Tibial artery (tissue), 4 donors: ENCODE measurements at regions of chr18 and their contacts with region 1.

Region 1: DNA sequence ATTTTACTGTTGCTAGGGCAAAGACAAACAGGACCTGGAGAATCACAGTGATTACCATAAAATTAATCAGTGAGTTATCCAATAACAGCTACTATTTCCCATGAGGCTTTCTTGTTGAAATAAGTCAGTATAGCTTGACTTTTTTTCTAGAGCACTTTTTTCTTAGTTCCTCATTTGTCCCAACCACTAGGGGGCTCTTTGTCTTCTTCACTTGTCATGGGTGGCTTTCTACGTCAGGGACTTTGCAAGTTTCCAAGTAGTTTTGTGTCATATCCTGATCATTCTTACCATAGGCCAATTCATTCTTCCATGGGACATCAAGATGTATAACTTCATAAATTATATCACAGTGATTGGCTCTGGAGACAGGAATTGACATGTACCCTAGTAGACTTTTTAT is 1019.6 kb upstream of the PIK3C3 start:
- DNase-seq: no peak
- H3K4me3 ChIP-seq: no peak overlapping the region
- H3K27ac ChIP-seq: no peak overlapping the region
- H3K4me1 ChIP-seq: peaks cover 0 to 4% (median 0%) of the 10 kb centered on the region in 4 donors
- H3K27me3 ChIP-seq: no peaks in the 10 kb centered on the region
- CTCF ChIP-seq: peak in 1 of 2 experiments; percentile 12

Region 2: GRCh38 chr18:41121116-41121826 is 185.8 kb after region 1 on chr18:
- intact Hi-C with region 1: no loop called
- DNase-seq: no peak
- H3K4me3 ChIP-seq: no peak overlapping the region
- H3K27ac ChIP-seq: no peak overlapping the region
- H3K4me1 ChIP-seq: peaks cover 0 to 6% (median 0%) of the 10 kb centered on the region in 4 donors
- H3K27me3 ChIP-seq: no peaks in the 10 kb centered on the region
- CTCF ChIP-seq: no peak

Region 3: DNA sequence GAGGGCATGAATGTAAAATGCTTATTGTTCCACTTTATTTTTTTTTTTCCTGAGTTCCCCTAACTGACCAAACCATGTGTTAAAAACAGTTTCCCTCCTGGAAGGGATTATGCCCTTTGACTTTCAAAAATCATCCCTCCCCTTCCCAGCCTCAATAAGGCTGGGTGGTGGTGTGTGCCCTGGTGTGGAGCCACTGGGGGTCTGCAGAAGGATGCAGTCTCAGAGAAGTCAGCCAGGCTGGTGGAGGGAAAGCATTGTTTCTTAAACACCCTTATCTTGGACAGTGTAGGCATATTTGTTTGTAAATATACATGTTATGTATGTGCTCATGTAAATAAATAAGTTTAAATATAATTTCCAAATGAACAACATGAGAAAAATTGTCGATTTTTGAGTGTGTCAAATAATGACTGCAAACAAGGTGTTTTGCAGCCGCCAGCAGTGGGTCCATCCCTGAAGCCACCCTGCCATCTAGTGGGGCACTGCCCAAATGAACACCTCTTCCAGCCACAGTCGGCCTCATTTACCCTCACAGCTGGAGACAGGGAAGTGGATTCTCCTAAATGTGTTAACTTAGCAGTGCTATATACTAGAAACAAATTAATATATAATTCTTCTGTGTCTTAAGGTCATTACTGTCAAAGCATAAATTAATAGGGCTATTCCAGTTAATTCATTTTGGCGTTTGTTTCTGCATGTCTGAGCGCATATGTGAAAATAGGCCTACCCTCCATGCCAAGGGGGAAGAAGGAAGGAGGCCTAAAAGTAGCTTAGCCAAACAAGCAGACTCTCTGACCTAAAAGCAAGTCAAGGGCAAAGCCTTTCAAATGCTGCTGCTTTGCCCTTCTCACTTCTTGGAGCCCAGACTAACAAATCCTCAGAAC is 810.0 kb after region 1 on chr18:
- intact Hi-C with region 1: loop called (anchors 10 kb)
- DNase-seq: no peak
- H3K4me3 ChIP-seq: no peak overlapping the region
- H3K27ac ChIP-seq: no peak overlapping the region
- H3K4me1 ChIP-seq: peaks cover 0 to 8% (median 2%) of the 10 kb centered on the region in 4 donors
- H3K27me3 ChIP-seq: no peaks in the 10 kb centered on the region
- CTCF ChIP-seq: peak; percentile 44 to 49